ENCODE measurements at regions of chr16 and their contacts with region 1.

Region 1: DNA sequence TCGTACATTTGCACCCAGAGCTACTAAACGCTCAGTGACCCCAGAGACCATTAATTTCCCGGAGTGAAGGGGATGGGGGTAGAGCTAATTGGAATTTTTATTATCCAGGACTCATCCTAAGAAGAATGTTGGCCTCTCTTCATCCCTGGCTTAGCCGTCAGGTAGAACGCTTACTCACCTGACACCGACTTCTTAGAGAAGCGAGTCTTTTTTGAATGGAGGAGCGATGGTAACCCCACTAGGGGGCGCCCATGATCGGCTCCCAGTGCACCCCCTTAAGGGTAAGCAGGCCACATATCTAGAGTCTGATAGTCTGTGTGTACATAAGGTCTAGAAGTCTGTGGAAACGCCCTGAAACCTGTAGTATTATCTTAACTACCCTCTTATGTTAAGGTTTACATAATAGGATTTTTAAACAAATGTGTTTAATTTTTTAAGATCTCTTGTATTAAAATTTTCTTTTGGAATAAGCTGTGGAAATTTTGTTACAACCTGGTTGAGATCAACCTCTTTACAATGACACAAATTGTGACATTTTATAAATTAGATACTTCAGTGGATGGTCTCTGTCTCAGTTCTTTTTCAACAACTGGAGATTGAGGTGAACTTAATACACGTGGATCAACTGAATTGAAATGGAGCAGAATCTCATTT is 229.8 kb downstream of the CPPED1 start:
- DNase-seq: peak; percentile 47 to 88
- H3K4me3 ChIP-seq: no peak overlapping the region
- H3K27ac ChIP-seq: no peak overlapping the region
- H3K4me1 ChIP-seq: no peaks in the 10 kb centered on the region
- H3K27me3 ChIP-seq: no peaks in the 10 kb centered on the region
- CTCF ChIP-seq: peak; percentile 67 to 80 (median 72)
- EP300 ChIP-seq: no peak
- POLR2A ChIP-seq: no peak
- RAD21 ChIP-seq: peak; percentile 84 to 90

Region 2: GRCh38 chr16:12587170-12587569 is 13.3 kb after region 1 on chr16:
- CTCF ChIA-PET with region 1: interaction called, 15 read pairs
- POLR2A ChIA-PET with region 1: interaction called, 3 read pairs
- DNase-seq: no peak
- H3K4me3 ChIP-seq: no peak overlapping the region
- H3K27ac ChIP-seq: no peak overlapping the region
- H3K4me1 ChIP-seq: peaks cover 5 to 7% (median 7%) of the 10 kb centered on the region in 4 experiments; a peak in 6 of 7 replicates
- H3K27me3 ChIP-seq: no peaks in the 10 kb centered on the region
- CTCF ChIP-seq: no peak
- EP300 ChIP-seq: no peak
- POLR2A ChIP-seq: no peak
- RAD21 ChIP-seq: no peak

Region 3: DNA sequence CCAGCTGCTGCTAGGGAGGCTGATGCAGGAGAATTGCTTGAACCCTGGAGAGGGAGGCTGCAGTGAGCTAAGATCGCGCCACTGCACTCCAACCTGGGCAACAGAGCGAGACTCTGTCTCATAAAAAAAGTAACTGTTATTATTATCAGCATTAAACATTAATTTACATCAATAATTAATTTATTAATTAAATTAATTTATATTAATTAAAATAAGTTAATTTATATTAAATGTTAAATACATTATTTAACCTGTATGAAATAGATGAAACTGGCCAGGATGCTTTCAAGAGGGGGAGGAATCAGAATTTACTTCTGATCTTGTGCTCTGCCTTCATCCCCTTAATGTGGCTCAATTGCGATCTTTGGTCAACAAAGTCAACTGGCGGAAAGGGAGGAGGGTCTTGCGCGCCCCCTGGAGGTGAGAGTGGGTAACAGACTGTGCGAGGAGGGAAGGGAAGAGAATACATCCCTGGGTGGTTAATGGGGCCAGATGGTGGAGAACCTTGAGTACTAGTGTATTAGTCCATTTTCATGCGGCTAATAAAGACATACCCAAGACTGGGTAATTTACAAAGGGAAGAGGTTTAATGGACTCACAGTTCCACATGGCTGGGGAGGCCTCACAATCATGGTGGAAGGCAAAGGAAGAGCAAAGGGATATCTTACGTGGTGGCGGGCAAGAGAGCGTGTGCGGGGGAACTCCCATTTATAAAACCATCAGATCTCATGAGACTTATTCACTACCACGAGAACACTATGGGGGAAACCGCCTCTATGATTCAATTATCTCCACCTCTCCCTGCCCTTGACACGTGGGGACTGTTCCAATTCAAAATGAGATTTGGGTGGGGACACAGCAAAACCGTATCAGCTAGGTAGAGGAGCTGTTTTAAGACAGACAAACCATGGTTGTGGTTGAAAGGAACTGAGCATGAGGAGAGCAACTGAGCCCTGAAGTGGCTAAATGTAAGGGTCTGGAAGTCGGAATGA is 245.6 kb after region 1 on chr16:
- CTCF ChIA-PET with region 1: interaction called, 13 read pairs
- POLR2A ChIA-PET with region 1: no interaction called
- DNase-seq: peak in 1 of 2 experiments; percentile 96
- H3K4me3 ChIP-seq: no peak overlapping the region
- H3K27ac ChIP-seq: no peak overlapping the region
- H3K4me1 ChIP-seq: no peaks in the 10 kb centered on the region
- H3K27me3 ChIP-seq: no peaks in the 10 kb centered on the region
- CTCF ChIP-seq: peak; percentile 83 to 96 (median 91)
- EP300 ChIP-seq: no peak
- POLR2A ChIP-seq: no peak
- RAD21 ChIP-seq: peak; percentile 92

Measured in H1 (cell line).